ENCODE measurements at regions of chr2 and their contacts with region 1.

Region 1: DNA sequence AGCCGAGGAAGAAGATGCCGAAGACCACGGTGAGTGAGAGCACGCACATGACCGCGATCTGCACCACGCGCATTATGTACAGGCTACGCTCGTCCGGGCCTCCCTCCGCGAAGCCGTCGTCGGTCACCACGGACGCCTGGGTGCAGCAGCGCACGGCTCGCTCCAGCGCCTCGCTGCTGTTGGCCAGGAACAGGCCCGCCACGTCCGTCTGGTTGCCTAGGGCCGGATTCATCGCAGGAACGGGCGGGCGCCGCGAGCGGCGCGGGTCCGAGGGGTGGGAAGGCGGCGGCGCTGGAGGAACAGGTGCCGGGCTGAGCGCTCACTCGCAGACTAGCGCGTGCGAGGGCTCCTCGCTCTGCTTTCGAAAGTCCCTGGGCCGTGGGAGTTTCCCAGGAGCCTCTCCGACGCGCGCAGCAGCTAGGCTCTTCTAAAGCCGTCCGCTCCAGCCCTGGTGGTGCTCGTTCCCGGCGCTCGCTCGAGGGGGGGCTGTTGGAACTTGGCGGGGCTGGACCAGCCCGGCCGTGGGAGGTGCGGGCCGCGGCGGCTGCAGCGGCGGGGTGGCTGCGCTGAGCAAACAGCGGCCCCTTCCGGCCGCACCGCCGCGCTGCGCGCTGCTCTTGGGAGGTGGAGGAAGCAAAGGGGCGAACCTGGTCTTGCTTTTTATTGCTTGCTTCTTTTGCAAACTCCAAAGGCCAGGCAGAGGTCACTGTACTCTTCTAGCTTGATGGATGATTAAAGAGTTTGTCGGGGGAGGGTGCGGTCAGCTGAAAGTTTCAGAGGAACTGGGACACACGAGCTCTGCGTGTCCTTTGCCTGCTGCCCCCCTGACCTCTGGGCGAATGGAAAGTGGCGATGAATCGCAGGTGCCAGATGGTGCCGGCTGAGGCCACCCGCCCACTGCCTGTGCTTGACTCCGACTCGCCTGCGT is at the start of gene RPRM:
- DNase-seq: peak; percentile 71
- H3K4me3 ChIP-seq: peak within 1 kb of the TSS; percentile 39
- H3K27ac ChIP-seq: no peak within 1 kb of the TSS
- H3K4me1 ChIP-seq: peaks cover 18% of the 10 kb centered on the region
- H3K27me3 ChIP-seq: peaks cover 81% of the 10 kb centered on the region
- CTCF ChIP-seq: peak; percentile 75
- total RNA-seq, gene RPRM: not detected in 2 replicates

Region 2: GRCh38 chr2:152740743-152741328 is 737.8 kb before region 1 on chr2:
- CTCF ChIA-PET with region 1: no interaction called
- POLR2A ChIA-PET with region 1: no interaction called
- intact Hi-C with region 1: loop called (anchors 5 kb)
- DNase-seq: peak; percentile 78
- H3K4me3 ChIP-seq: no peak overlapping the region
- H3K27ac ChIP-seq: no peak overlapping the region
- H3K4me1 ChIP-seq: no peaks in the 10 kb centered on the region
- H3K27me3 ChIP-seq: no peaks in the 10 kb centered on the region
- CTCF ChIP-seq: peak; percentile 84

Region 3: GRCh38 chr2:152861349-152861942 is 617.2 kb before region 1 on chr2:
- CTCF ChIA-PET with region 1: no interaction called
- POLR2A ChIA-PET with region 1: no interaction called
- intact Hi-C with region 1: loop called (anchors 5 kb)
- DNase-seq: peak; percentile 46
- H3K4me3 ChIP-seq: no peak overlapping the region
- H3K27ac ChIP-seq: no peak overlapping the region
- H3K4me1 ChIP-seq: no peaks in the 10 kb centered on the region
- H3K27me3 ChIP-seq: no peaks in the 10 kb centered on the region
- CTCF ChIP-seq: peak; percentile 76

Region 4: GRCh38 chr2:152925547-152926327 is 552.9 kb before region 1 on chr2:
- CTCF ChIA-PET with region 1: no interaction called
- POLR2A ChIA-PET with region 1: no interaction called
- intact Hi-C with region 1: loop called (anchors 5 kb)
- DNase-seq: peak; percentile 87
- H3K4me3 ChIP-seq: no peak overlapping the region
- H3K27ac ChIP-seq: no peak overlapping the region
- H3K4me1 ChIP-seq: no peaks in the 10 kb centered on the region
- H3K27me3 ChIP-seq: peaks cover 11% of the 10 kb centered on the region
- CTCF ChIP-seq: peak; percentile 94

Region 5: DNA sequence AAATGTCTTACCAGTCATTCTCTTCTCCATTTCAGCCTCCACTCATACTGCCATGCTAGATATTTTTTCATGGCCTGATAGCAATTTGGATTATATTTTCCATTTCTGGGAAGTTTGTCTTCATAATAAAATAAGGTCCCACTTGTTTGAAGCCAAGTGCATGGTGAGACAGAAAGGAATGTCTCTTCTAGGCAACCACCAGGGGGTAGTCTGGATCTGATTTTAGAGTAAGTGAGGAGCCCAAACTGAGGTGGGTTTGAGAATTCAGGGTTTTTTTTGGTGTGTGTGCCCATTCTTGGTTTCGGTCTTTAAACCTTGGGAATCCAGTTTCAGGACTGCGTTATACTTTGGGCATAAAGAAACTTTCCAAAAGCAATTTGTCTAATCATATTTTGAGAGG is 315.5 kb before region 1 on chr2:
- CTCF ChIA-PET with region 1: no interaction called
- POLR2A ChIA-PET with region 1: no interaction called
- intact Hi-C with region 1: loop called (anchors 5 kb)
- DNase-seq: peak; percentile 51
- H3K4me3 ChIP-seq: no peak overlapping the region
- H3K27ac ChIP-seq: no peak overlapping the region
- H3K4me1 ChIP-seq: no peaks in the 10 kb centered on the region
- H3K27me3 ChIP-seq: no peaks in the 10 kb centered on the region
- CTCF ChIP-seq: peak; percentile 61